ENCODE measurements at regions of chr1 and their contacts with region 1.

Region 1: DNA sequence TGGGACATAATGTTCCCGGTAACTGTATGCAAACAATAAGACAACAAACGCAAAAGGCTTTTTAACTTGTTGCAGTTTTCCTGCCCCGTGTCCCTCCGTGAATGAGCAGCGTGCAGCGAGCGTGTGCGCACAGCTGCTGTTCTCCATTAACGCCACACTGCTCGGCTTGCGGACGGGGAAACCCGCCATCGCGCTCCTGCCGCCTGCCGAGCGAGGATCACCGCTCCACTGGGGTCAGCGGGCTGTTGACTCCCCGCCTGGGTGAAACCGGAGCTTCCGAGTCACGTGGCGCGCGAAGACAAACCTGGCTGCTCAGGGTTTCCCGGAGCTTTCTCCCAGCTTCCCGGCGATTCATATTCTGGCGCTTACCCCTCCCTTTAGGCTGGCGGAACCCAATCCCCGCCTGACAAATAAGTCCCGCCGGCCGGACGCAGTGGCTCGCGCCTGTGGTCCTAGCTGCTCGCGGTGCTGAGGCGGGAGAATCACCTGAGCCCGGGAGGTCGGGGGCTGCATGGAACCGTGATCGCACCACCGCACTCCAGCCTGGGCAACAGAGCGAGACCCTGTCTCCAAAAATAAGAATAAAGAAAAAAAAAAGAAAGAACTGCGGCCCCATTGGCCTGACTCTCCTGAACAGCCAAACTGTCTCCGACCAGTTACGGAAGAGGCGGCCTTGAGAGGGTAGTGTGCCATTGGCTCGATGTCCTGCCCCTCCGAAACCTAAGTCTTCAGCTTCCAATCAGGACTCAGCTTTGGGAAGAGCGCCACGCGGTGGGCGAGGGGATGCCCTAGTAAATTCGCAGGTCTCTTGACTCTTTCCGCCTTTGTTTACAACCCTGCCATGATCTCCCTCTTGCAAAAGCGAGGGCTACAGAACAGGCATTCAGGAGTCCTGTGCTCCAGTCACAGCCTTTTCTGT is at the start of gene CREB3L4:
- DNase-seq: peak; percentile 92 to 93
- H3K4me3 ChIP-seq: peak within 1 kb of the TSS; percentile 90
- H3K27ac ChIP-seq: peak within 1 kb of the TSS; percentile 80
- H3K4me1 ChIP-seq: peaks cover 37% of the 10 kb centered on the region
- H3K27me3 ChIP-seq: no peaks in the 10 kb centered on the region
- CTCF ChIP-seq: peak; percentile 58; the same call in 1 of the 2 replicates
- total RNA-seq, gene CREB3L4: 23.4 and 25.9 TPM in 2 replicates

Region 2: GRCh38 chr1:153727463-153728304 is 239.7 kb before region 1 on chr1 and contains the start of gene INTS3:
- CTCF ChIA-PET with region 1: no interaction called
- POLR2A ChIA-PET with region 1: interaction called, 24 read pairs
- intact Hi-C with region 1: no loop called
- DNase-seq: peak; percentile 99
- H3K4me3 ChIP-seq: peak within 1 kb of the TSS; percentile 94
- H3K27ac ChIP-seq: peak within 1 kb of the TSS; percentile 84
- H3K4me1 ChIP-seq: peaks cover 21% of the 10 kb centered on the region
- H3K27me3 ChIP-seq: no peaks in the 10 kb centered on the region
- CTCF ChIP-seq: peak; percentile 24; the same call in 1 of the 2 replicates
- total RNA-seq, gene INTS3: 62.5 and 91.7 TPM in 2 replicates

Region 3: GRCh38 chr1:153946622-153947241 is 20.6 kb before region 1 on chr1 and contains the start of gene DENND4B:
- CTCF ChIA-PET with region 1: no interaction called
- POLR2A ChIA-PET with region 1: no interaction called
- intact Hi-C with region 1: loop called (anchors 1 kb)
- DNase-seq: peak; percentile 59 to 79
- H3K4me3 ChIP-seq: peak within 1 kb of the TSS; percentile 85
- H3K27ac ChIP-seq: no peak within 1 kb of the TSS
- H3K4me1 ChIP-seq: peaks cover 10% of the 10 kb centered on the region; the same call in 1 of the 2 replicates
- H3K27me3 ChIP-seq: no peaks in the 10 kb centered on the region
- CTCF ChIP-seq: peak; percentile 88
- total RNA-seq, gene DENND4B: 41.3 and 52.7 TPM in 2 replicates

Region 4: GRCh38 chr1:154000420-154000819 is 33.1 kb after region 1 on chr1:
- CTCF ChIA-PET with region 1: no interaction called
- POLR2A ChIA-PET with region 1: interaction called, 15 read pairs
- intact Hi-C with region 1: no loop called
- DNase-seq: no peak
- H3K4me3 ChIP-seq: no peak overlapping the region
- H3K27ac ChIP-seq: peak overlapping the region; percentile 76
- H3K4me1 ChIP-seq: peaks cover 38% of the 10 kb centered on the region
- H3K27me3 ChIP-seq: no peaks in the 10 kb centered on the region
- CTCF ChIP-seq: no peak

Region 5: DNA sequence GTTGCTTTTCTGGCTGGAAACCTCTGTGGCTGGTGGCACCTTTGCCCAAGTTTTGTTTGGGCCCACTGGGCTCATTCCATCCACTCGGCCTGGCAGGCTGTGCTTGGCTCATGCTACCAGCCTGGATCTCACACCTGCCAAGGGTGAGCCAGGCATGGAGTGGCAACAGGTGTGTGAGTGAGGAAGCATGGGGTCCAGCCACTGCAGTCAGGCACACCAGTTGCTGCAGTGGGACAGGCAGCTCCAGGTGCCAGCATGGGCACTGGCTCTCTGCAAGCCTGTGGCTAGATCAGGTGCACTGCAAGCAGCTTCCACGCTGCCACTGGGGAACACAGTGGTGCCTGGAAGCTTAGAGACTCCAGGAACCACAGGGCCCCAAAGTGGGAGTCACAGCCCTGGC is 130.5 kb after region 1 on chr1:
- CTCF ChIA-PET with region 1: no interaction called
- POLR2A ChIA-PET with region 1: no interaction called
- intact Hi-C with region 1: no loop called
- DNase-seq: no peak
- H3K4me3 ChIP-seq: no peak overlapping the region
- H3K27ac ChIP-seq: no peak overlapping the region
- H3K4me1 ChIP-seq: no peaks in the 10 kb centered on the region
- H3K27me3 ChIP-seq: no peaks in the 10 kb centered on the region
- CTCF ChIP-seq: no peak

Region 6: DNA sequence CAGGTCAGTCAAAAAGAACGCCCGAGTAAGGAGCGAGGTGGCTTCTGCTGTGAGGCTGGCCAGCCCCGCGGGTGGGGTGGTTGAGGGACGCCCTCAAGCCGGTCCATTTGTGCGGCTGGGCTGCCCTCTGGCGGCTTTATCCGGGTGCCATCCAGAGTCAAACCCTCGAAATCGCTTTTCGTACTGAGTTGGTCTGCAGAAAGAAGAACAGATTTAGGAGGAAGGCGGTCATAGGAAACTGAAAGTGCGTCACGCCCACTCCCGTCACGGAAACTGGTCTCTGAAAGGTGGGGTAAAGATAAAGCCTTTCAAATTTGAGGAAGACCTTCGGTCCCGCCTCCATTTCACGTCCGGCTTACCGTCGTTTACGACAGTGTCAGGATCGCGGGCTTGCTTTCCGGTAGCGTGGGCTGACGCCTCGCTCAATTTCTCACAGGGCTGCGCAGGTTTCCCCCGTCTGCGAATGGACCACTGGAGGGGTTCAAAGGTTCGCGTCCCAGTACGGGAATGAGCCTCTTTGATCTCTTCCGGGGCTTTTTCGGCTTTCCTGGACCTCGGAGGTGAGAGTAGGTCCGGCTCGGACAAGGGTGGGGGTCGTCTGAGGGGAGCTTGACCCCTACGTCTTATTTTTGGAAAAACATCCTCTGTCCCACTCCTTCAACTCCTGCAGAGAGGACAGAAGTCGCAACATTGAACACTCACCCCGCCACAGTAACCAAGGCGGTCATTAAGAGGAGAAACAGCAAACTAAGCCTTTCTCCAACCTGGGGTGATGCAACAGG is 305.1 kb after region 1 on chr1 and contains the start of gene HAX1:
- CTCF ChIA-PET with region 1: no interaction called
- POLR2A ChIA-PET with region 1: no interaction called
- intact Hi-C with region 1: loop called (anchors 5 kb)
- DNase-seq: peak; percentile 87 to 94
- H3K4me3 ChIP-seq: peak within 1 kb of the TSS; percentile 95
- H3K27ac ChIP-seq: peak within 1 kb of the TSS; percentile 78
- H3K4me1 ChIP-seq: peaks cover 10% of the 10 kb centered on the region
- H3K27me3 ChIP-seq: no peaks in the 10 kb centered on the region
- CTCF ChIP-seq: peak; percentile 86
- total RNA-seq, gene HAX1: 89.7 and 92.3 TPM in 2 replicates